Body of pancreas (tissue), 4 donors: ENCODE measurements at regions of chr17 and their contacts with region 1.

Region 1: GRCh38 chr17:48678141-48678971 is 44.0 kb downstream of the PRAC1 start:
- DNase-seq: peak; percentile 67 to 78 (median 68)
- ATAC-seq: peak; percentile 83
- H3K4me3 ChIP-seq: no peak overlapping the region
- H3K27ac ChIP-seq: no peak overlapping the region
- H3K4me1 ChIP-seq: peaks cover 7% of the 10 kb centered on the region
- H3K27me3 ChIP-seq: no peaks in the 10 kb centered on the region
- CTCF ChIP-seq: peak; percentile 74 to 95 (median 83)
- POLR2A ChIP-seq: peak in 1 of 3 donors; percentile 3

Region 2: DNA sequence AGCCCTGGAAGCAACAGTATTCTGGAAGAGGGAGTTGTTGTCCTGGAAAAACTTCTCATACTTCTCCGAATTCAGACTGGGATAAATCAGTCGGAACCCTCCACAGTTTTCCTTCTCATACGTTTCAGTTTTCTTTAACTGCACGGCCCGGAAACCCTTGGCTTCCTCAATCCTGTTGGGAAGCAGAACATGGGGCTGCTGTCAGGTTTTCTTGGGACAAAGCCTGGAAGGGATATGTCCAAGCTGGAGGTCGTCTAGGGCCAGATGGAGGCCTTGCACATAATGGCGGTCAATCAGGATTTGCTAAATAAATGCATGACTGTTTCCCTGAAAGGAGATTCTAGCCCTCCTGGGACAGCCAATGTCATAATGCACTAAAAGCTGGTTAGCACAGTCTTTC is 109.5 kb after region 1 on chr17:
- intact Hi-C with region 1: loop called (anchors 10 kb)
- DNase-seq: no peak
- ATAC-seq: no peak
- H3K4me3 ChIP-seq: no peak overlapping the region
- H3K27ac ChIP-seq: no peak overlapping the region
- H3K4me1 ChIP-seq: no peaks in the 10 kb centered on the region
- H3K27me3 ChIP-seq: no peaks in the 10 kb centered on the region
- CTCF ChIP-seq: no peak
- POLR2A ChIP-seq: no peak

Region 3: GRCh38 chr17:48883171-48883570 is 204.8 kb after region 1 on chr17:
- intact Hi-C with region 1: loop called (anchors 5 kb)
- DNase-seq: no peak
- ATAC-seq: no peak
- H3K4me3 ChIP-seq: no peak overlapping the region
- H3K27ac ChIP-seq: no peak overlapping the region
- H3K4me1 ChIP-seq: peaks cover 5% of the 10 kb centered on the region
- H3K27me3 ChIP-seq: no peaks in the 10 kb centered on the region
- CTCF ChIP-seq: no peak
- POLR2A ChIP-seq: no peak

Region 4: GRCh38 chr17:49031965-49032928 is 353.9 kb after region 1 on chr17:
- intact Hi-C with region 1: loop called (anchors 10 kb)
- DNase-seq: peak; percentile 45 to 58 (median 53)
- ATAC-seq: peak; percentile 79
- H3K4me3 ChIP-seq: no peak overlapping the region
- H3K27ac ChIP-seq: no peak overlapping the region
- H3K4me1 ChIP-seq: no peaks in the 10 kb centered on the region
- H3K27me3 ChIP-seq: peaks cover 0 to 3% of the 10 kb centered on the region in 2 donors
- CTCF ChIP-seq: peak; percentile 41 to 88 (median 80)
- POLR2A ChIP-seq: no peak